Activated CD8-positive, alpha-beta memory T cell treated with anti-CD3 and anti-CD28 coated beads, Interleukin-2, amount 10 ng/mL, durations not matched to agents 7 days and 5 days (primary cell): ENCODE measurements at regions of chr6 and their contacts with region 1.

Region 1: DNA sequence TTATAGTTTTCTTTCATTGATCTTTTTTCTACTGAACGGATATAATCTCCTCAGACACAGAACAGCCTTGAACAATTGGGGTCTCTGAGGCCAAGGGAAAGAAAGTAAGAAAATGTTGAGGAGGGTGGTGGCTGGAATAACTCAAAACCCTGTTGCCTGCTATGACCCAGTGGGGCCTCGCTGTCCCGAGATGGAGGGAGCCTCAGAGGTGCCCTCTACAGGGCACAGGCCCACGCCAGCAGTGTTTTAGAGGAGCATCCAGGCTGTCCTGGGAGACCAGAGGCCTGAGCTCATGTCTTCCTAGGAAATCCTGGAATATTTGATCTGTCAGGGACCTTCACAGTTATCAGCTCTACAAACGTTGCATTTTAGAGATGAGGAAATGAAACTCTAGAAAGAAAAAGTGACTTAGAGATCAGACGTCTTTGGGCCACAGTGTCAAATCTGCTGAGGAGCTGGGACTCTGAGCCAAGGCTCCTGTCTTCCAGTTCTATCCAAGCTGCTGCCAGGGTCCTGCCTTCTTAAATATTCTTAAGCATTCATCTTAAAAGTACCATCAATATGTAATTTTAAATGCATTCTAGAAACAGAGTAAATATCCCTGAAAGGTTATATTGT is 26.3 kb downstream of the ALDH5A1 start:
- DNase-seq: peak; percentile 53
- ATAC-seq: peak; percentile 82
- H3K4me3 Mint-ChIP-seq: no peak overlapping the region
- H3K27ac Mint-ChIP-seq: no peak overlapping the region
- H3K4me1 Mint-ChIP-seq: peaks cover 6% of the 10 kb centered on the region
- H3K27me3 Mint-ChIP-seq: no peaks in the 10 kb centered on the region

Region 2: GRCh38 chr6:24494821-24495795 is 25.9 kb before region 1 on chr6 and contains the start of gene ALDH5A1:
- CTCF ChIA-PET with region 1: interaction called, 17 read pairs
- DNase-seq: peak; percentile 80
- ATAC-seq: peak; percentile 81
- H3K4me3 Mint-ChIP-seq: peak within 1 kb of the TSS; percentile 75
- H3K27ac Mint-ChIP-seq: peak within 1 kb of the TSS; percentile 34
- H3K4me1 Mint-ChIP-seq: peaks cover 14% of the 10 kb centered on the region
- H3K27me3 Mint-ChIP-seq: no peaks in the 10 kb centered on the region
- total RNA-seq, gene ALDH5A1: 3.7 to 6.5 TPM